ENCODE measurements at regions of chr12 and their contacts with region 1.

Region 1: GRCh38 chr12:57063991-57064685 is 14.2 kb upstream of the MYO1A start:
- DNase-seq: peak in 1 of 2 donors; percentile 92
- ATAC-seq: peak; percentile 91 to 97 (median 92)
- H3K4me3 ChIP-seq: no peak overlapping the region
- H3K4me3 Mint-ChIP-seq: peak overlapping the region; percentile 84
- H3K27ac ChIP-seq: peak overlapping the region; percentile 79
- H3K27ac Mint-ChIP-seq: peak overlapping the region; percentile 88 to 95
- H3K4me1 ChIP-seq: no peaks in the 10 kb centered on the region
- H3K4me1 Mint-ChIP-seq: peaks cover 7 to 8% of the 10 kb centered on the region in 2 donors
- H3K27me3 ChIP-seq: no peaks in the 10 kb centered on the region
- H3K27me3 Mint-ChIP-seq: no peaks in the 10 kb centered on the region
- CTCF ChIP-seq: no peak

Region 2: GRCh38 chr12:56957229-56957939 is 106.8 kb before region 1 on chr12 and contains the start of gene RDH16:
- intact Hi-C with region 1: no loop called
- DNase-seq: no peak
- ATAC-seq: no peak
- H3K4me3 ChIP-seq: no peak within 1 kb of the TSS
- H3K4me3 Mint-ChIP-seq: no peak within 1 kb of the TSS
- H3K27ac ChIP-seq: no peak within 1 kb of the TSS
- H3K27ac Mint-ChIP-seq: no peak within 1 kb of the TSS
- H3K4me1 ChIP-seq: no peaks in the 10 kb centered on the region
- H3K4me1 Mint-ChIP-seq: no peaks in the 10 kb centered on the region
- H3K27me3 ChIP-seq: no peaks in the 10 kb centered on the region
- H3K27me3 Mint-ChIP-seq: peaks cover 0 to 12% of the 10 kb centered on the region in 2 donors
- CTCF ChIP-seq: no peak
- total RNA-seq, gene RDH16: 1.3 to 2.3 (median 1.6) TPM

Region 3: GRCh38 chr12:57008178-57008577 is 56.0 kb before region 1 on chr12:
- intact Hi-C with region 1: loop called (anchors 1 kb)
- DNase-seq: peak in 1 of 2 donors; percentile 74
- ATAC-seq: peak in 1 of 3 donors; percentile 27
- H3K4me3 ChIP-seq: no peak overlapping the region
- H3K4me3 Mint-ChIP-seq: peak overlapping the region; percentile 23
- H3K27ac ChIP-seq: no peak overlapping the region
- H3K27ac Mint-ChIP-seq: no peak overlapping the region
- H3K4me1 ChIP-seq: peaks cover 17% of the 10 kb centered on the region
- H3K4me1 Mint-ChIP-seq: peaks cover 27 to 33% of the 10 kb centered on the region in 2 donors
- H3K27me3 ChIP-seq: no peaks in the 10 kb centered on the region
- H3K27me3 Mint-ChIP-seq: peaks cover 6 to 8% of the 10 kb centered on the region in 2 donors
- CTCF ChIP-seq: peak; percentile 38

Region 4: GRCh38 chr12:57078519-57079404 is 14.6 kb after region 1 on chr12 and contains the start of gene NEMP1:
- intact Hi-C with region 1: loop called (anchors 2 kb)
- DNase-seq: peak; percentile 90 to 99
- ATAC-seq: peak; percentile 94 to 99 (median 95)
- H3K4me3 ChIP-seq: peak within 1 kb of the TSS; percentile 63
- H3K4me3 Mint-ChIP-seq: peak within 1 kb of the TSS; percentile 100
- H3K27ac ChIP-seq: peak within 1 kb of the TSS; percentile 80
- H3K27ac Mint-ChIP-seq: peak within 1 kb of the TSS; percentile 97 to 99
- H3K4me1 ChIP-seq: peaks cover 12% of the 10 kb centered on the region
- H3K4me1 Mint-ChIP-seq: peaks cover 11 to 13% of the 10 kb centered on the region in 2 donors
- H3K27me3 ChIP-seq: no peaks in the 10 kb centered on the region
- H3K27me3 Mint-ChIP-seq: no peaks in the 10 kb centered on the region
- CTCF ChIP-seq: no peak
- total RNA-seq, gene NEMP1: 11.1 to 16.7 (median 12.1) TPM